Aorta (tissue), 5 donors: ENCODE measurements at regions of chr19 and their contacts with region 1.

Region 1: DNA sequence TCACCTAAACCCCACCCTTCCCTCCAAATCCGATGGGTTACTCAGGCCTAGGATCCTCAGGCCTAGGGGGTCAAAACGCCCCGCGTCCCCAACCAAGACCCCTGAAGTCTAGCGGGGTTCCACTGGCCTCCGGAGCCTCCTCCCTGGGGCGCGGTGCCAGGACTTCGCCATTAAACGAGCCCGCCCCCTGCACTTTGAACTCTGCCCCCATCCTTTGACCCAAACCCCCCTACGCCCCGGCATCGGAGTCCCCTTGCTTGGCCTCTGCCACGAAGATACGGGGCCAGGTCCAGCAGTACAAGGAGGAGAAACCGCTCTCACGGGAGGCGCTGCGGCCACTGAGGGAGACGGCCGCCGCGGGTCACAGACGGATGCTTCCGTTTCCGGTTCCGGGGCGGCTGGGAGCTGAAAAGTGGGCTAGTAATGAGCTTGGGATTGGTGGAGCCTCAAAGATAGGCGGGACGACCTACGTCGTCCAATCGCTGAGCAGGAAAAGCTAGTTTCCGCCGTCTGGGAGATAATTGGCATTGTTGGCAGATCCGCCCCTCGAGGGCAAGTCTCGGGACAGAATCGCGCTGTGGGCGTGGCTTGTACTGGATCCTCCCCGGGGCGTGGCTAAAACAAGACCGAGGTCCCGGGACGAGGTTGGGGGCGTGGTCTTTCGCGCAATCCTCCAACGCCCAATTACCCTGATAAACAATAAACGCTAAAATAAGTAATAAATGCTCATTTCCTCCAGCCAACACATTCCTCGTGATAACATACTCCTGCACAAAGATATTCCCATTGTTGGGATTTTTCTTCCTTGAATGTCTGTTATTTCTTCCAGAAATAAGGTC is 5.7 kb upstream of the ZNF77 start:
- DNase-seq: peak; percentile 100
- ATAC-seq: peak; percentile 98
- H3K4me3 ChIP-seq: peak overlapping the region; percentile 52 to 59
- H3K27ac ChIP-seq: peak overlapping the region; percentile 25 to 64
- H3K4me1 ChIP-seq: no peaks in the 10 kb centered on the region
- H3K27me3 ChIP-seq: no peaks in the 10 kb centered on the region

Region 2: DNA sequence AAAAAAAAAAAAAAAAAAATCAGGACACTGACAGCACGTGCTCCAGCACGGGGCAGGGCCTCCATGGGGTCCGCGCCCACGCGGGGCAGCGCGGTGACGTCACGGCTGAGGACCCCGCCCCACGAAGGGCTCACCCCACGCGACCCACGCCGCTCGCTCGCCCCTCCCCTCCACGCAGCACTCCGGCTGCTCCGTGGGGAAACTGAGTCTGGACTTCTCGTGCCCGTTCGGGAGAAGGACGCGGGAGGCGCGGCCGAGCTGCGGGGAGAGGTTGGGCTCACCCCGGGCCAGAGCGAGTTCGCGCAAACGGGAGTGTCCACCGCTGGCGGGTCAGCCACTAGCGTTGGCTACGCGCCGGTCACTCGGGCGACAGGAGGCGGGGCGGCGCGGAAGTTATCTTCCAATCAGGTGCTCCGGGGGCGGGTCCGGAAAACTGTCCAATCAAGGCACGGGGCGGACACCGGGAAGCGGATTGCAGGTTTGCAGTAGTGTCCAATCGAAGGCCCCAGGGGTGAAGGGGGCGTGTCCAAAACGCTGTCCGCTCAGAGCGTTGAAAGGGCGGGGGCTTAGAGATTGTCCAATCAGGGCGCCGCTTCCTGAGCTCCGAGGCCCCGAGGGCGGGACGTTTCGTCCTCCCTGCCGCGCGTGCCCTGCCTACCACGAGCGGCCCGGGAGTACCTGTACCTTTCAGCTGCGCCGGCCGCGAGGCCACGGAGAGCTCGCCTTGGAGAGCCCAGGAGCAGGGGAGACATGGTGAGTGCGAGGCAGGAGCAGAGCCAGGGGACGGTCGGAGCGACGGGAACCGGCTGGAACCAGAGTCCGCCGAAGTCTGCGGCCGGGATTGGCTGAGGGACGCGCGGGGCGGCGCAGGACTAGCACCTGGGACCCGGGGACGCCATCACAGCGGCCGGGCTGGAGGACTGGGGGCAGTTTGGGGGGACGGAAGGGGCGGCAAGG is 49.9 kb before region 1 on chr19 and contains the start of gene ZNF57:
- intact Hi-C with region 1: loop called in 1 of 2 experiments (anchors 1 kb)
- DNase-seq: peak; percentile 100
- ATAC-seq: peak; percentile 99
- H3K4me3 ChIP-seq: peak within 1 kb of the TSS; percentile 37 to 57
- H3K27ac ChIP-seq: peak within 1 kb of the TSS in 1 of 2 donors; percentile 43
- H3K4me1 ChIP-seq: no peaks in the 10 kb centered on the region
- H3K27me3 ChIP-seq: no peaks in the 10 kb centered on the region
- total RNA-seq, gene ZNF57: 2.7 to 4.1 TPM

Region 3: DNA sequence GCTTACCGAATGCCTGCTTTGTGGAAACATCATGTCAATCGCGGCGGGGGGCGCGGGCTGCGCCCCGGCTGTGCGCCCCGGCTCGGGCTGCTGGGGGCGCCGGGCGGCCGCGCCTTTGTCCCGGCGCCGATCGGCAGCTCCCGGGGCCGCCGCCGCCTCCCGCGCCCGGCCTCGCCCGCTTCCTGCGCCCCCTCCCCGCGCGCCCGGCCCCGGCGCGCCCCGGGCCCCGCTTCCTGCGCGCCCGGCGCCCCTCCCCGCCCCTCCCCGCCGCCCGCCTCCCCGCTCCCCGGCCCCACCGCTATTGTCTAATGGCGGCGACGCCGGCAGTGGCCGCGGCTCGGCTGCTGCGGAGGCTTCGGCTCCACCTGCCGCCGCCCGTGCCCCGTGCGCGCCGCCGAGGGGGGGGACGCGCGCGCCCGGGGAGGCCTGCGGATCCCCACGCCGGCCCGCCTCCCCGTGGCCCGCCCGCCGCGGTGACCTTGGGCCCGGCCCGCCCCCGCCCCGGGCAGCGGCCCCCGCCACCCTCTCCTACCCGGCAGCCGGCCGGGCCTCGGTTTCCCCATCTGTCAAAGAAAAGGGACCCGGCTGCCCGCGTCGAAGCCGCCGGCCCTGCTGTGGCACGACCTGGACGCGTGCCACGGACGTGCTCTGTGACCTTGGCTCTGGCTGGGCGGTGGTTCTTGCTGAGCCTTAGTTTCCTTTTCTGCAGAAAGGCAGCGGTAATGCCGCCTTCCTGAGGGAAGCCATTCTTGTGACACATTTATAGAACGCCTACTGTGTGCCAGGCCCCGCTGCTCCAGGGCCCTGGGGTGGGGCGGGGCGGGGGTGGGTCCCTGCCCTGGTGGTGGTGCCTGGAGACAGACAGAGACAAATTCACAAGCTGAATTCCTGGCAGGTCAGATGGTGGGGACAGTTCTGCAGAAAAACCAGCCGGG is 111.9 kb after region 1 on chr19 and contains the start of gene TLE5:
- intact Hi-C with region 1: loop called in 1 of 2 experiments (anchors 5 kb)
- DNase-seq: peak; percentile 67 to 88
- ATAC-seq: peak; percentile 71
- H3K4me3 ChIP-seq: peak within 1 kb of the TSS; percentile 92 to 99
- H3K27ac ChIP-seq: peak within 1 kb of the TSS; percentile 68 to 88
- H3K4me1 ChIP-seq: no peaks in the 10 kb centered on the region
- H3K27me3 ChIP-seq: no peaks in the 10 kb centered on the region
- total RNA-seq, gene TLE5: 305 to 374 TPM